PC-3 (cell line): ENCODE measurements at regions of chr3 and their contacts with region 1.

Region 1: GRCh38 chr3:39180546-39181346 is 11.6 kb downstream of the XIRP1 start:
- DNase-seq: peak; percentile 84
- ATAC-seq: peak; percentile 86
- H3K4me3 ChIP-seq: peak overlapping the region; percentile 65
- H3K27ac ChIP-seq: no peak overlapping the region
- H3K4me1 ChIP-seq: peaks cover 29% of the 10 kb centered on the region
- H3K27me3 ChIP-seq: no peaks in the 10 kb centered on the region
- CTCF ChIP-seq: no peak

Region 2: GRCh38 chr3:39107388-39108199 is 73.2 kb before region 1 on chr3 and contains the starts of genes GORASP1 and TTC21A:
- CTCF ChIA-PET with region 1: no interaction called
- POLR2A ChIA-PET with region 1: no interaction called
- intact Hi-C with region 1: loop called (anchors 2 kb)
- DNase-seq: peak; percentile 86
- ATAC-seq: peak; percentile 86
- H3K4me3 ChIP-seq: peak within 1 kb of the TSS; percentile 94
- H3K27ac ChIP-seq: no peak within 1 kb of the TSS
- H3K4me1 ChIP-seq: peaks cover 24% of the 10 kb centered on the region
- H3K27me3 ChIP-seq: no peaks in the 10 kb centered on the region
- CTCF ChIP-seq: no peak
- total RNA-seq, gene GORASP1: 47.4 and 58.9 TPM in 2 replicates
- total RNA-seq, gene TTC21A: 1.2 TPM in 2 replicates

Region 3: DNA sequence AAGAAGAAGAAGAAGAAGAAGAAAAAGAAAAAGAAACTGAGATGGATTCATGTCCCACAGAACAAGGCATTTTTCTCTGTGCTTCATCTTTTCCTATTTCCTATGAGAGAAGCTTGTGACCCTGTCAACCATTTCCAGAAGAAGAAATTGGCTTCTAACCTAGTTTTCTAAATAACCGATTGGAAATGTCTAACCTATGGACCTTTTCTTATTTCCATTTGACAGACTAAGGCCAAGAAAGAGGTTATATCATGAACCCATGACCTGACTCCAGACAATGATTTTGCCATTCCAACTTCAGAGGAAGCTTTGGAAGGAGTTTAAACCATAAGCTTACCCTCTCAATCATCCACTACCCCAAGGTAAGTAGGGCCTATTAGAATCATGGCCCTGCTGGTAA is 11.0 kb before region 1 on chr3:
- CTCF ChIA-PET with region 1: no interaction called
- POLR2A ChIA-PET with region 1: interaction called, 30 read pairs
- intact Hi-C with region 1: no loop called
- DNase-seq: no peak
- ATAC-seq: no peak
- H3K4me3 ChIP-seq: no peak overlapping the region
- H3K27ac ChIP-seq: no peak overlapping the region
- H3K4me1 ChIP-seq: peaks cover 18% of the 10 kb centered on the region
- H3K27me3 ChIP-seq: no peaks in the 10 kb centered on the region
- CTCF ChIP-seq: no peak